Calu3 (cell line): ENCODE measurements at regions of chr3 and their contacts with region 1.

Region 1: GRCh38 chr3:16048435-16049318 is 125.8 kb upstream of the GALNT15 start:
- DNase-seq: peak; percentile 67
- H3K4me3 Mint-ChIP-seq: peak overlapping the region; percentile 15
- H3K27ac Mint-ChIP-seq: no peak overlapping the region
- H3K4me1 Mint-ChIP-seq: peaks cover 9% of the 10 kb centered on the region
- H3K27me3 Mint-ChIP-seq: no peaks in the 10 kb centered on the region
- CTCF ChIP-seq: peak; percentile 58

Region 2: DNA sequence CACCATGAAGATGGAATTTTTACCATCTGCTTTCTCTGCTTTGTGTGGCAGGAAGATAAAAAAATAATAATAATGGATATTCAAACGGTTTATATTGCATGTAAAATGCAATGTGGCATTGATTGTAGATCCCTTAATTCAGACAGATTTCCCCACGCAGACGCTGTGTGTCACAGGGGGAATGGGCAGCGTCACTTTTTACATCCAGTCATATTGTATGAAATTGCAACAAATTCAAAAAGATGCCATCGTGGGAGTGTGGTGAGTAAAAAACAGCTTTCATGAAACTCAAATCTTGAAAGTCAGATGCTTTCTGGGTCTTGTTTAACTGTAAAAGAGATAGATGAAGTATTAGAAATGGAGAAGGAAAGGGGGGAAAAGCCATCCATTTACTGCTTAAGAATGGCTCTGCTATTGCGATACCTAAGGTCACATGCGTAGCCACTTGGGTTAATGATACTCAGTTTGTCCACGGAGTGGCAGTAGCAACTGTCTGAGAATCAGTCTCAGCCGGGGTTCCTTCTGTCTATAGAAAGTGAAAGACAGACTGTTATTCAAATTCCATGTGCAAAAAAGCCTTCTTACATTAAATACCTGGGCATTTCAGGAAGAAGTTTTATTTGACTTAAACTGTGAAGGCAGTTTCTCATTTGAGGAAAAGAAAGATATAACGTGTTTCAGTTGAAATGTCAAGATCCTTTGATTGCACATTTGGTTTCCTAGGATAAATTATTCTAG is 418.6 kb before region 1 on chr3:
- CTCF ChIA-PET with region 1: no interaction called
- intact Hi-C with region 1: loop called (anchors 5 kb)
- DNase-seq: peak; percentile 58
- H3K4me3 Mint-ChIP-seq: no peak overlapping the region
- H3K27ac Mint-ChIP-seq: peak overlapping the region; percentile 34
- H3K4me1 Mint-ChIP-seq: peaks cover 9% of the 10 kb centered on the region
- H3K27me3 Mint-ChIP-seq: no peaks in the 10 kb centered on the region
- CTCF ChIP-seq: no peak

Region 3: DNA sequence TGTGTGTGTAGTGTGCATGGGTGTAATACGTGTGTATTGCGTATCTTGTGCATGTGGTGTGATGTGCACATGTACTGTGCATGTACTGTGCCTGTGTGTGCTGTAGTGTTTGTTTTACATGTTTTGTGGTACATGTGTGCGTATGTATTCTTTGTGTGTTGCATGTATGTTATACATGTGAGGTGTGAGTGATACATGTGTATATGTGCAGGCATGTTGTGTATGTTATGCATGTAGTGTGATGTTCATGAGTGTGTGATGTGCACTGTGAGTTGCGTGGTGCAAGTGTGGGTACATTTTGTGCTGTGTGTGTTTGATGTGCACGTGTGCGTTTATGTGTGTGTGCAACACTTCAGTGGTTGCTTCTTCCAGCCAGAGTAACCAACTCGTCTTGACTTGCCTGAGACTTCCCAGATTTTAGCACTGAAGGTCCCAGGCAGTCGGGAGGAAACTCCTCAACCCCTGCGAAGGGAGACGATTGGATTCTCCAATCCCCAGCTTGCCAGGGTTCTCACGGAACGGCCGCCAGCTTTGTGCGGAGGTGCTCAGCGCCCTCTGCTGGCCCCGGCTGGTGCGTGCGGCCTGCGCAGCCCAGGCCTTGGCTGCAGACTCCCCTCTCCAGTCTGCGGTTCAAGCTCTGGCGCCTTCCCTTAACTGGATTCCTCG is 129.4 kb after region 1 on chr3:
- CTCF ChIA-PET with region 1: interaction called, 15 read pairs
- intact Hi-C with region 1: loop called (anchors 1 kb)
- DNase-seq: peak; percentile 83
- H3K4me3 Mint-ChIP-seq: no peak overlapping the region
- H3K27ac Mint-ChIP-seq: no peak overlapping the region
- H3K4me1 Mint-ChIP-seq: no peaks in the 10 kb centered on the region
- H3K27me3 Mint-ChIP-seq: peaks cover 34% of the 10 kb centered on the region
- CTCF ChIP-seq: peak; percentile 82